ENCODE measurements at regions of chr1 and their contacts with region 1.

Region 1: DNA sequence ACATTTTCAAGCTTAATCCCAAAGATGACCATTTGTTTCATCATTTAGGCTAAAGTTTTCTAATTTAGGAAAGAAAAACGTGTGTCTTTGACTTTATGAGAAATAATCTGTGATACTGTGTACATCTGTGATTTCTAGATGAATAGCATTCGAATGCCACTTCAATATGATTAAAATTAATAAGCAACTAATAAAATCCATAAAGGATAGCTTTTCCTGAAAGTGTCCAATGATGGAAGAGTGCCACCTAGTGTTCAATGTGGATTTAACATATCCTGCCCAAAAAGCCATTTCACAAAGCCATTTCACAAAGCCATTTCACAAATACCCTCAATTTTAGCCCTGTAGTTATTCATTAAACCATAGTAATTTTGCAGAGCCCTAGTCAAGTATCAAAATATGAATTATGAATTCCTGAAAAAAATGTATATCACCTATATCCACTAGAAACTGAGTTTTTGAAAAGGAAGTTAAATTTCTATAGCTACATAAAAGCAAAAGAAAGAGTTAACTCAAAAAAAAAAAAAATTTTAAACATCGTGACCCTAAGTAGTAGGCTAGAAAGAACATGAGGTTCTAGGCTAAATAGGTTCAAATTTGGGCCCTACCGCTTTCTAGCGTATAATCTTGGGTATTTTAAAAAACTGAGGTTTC is 19.1 kb downstream of the NME7 start:
- DNase-seq: peak; percentile 84
- ATAC-seq: no peak
- H3K4me3 ChIP-seq: no peak overlapping the region
- H3K27ac ChIP-seq: no peak overlapping the region
- H3K4me1 ChIP-seq: 0 out of 2 replicates have a peak, but pooled peaks cover 2% of the 10 kb centered on the region
- H3K27me3 ChIP-seq: no peaks in the 10 kb centered on the region
- CTCF ChIP-seq: peak; percentile 97

Region 2: DNA sequence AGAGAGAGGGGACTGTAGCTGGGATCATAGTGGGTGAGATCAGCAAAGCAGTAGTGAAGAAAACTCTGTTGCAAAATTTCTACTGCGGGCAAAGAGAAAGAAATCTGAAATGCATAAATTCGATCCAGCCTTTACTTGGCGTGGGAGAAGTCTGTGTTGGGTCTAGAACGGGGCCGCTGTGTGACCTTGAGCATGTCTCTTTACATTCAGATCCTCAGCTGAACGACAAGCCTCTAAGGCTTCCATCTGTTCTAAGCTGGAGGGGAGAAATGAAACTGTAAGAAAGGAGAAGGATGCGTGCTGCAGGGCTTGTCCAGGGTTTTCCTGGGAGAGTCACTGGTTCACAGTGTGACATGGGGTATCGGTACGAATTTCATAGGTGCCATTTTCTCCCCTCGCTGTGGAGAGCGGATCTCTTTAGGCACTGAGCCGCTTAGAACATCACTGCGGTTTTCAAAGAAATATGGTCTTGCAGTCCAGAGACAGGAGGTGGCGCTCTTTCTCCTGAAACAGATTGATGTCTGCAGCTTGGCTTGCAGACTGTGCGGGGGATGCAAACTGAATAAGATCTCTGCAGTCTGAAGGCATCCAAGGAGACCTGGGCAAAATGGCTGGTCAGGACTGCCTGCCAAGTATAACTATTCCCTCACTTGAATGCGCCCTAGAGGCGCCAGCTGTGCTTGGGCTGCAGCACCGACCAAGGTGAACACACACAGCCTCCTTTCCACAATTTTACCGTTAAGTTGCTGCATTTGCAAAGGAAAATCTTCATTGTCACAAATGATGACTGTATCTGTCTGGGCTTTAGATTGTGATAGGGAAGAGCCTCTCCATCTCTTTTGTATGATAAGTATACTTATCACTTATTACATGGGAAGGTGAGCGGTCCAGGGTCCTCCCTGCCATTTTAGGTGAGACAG is 908.8 kb before region 1 on chr1:
- CTCF ChIA-PET with region 1: interaction called, 3 read pairs
- POLR2A ChIA-PET with region 1: no interaction called
- intact Hi-C with region 1: loop called (anchors 5 kb)
- DNase-seq: peak; percentile 96
- ATAC-seq: peak; percentile 94
- H3K4me3 ChIP-seq: peak overlapping the region; percentile 57
- H3K27ac ChIP-seq: no peak overlapping the region
- H3K4me1 ChIP-seq: no peaks in the 10 kb centered on the region
- H3K27me3 ChIP-seq: no peaks in the 10 kb centered on the region
- CTCF ChIP-seq: peak; percentile 96

Region 3: DNA sequence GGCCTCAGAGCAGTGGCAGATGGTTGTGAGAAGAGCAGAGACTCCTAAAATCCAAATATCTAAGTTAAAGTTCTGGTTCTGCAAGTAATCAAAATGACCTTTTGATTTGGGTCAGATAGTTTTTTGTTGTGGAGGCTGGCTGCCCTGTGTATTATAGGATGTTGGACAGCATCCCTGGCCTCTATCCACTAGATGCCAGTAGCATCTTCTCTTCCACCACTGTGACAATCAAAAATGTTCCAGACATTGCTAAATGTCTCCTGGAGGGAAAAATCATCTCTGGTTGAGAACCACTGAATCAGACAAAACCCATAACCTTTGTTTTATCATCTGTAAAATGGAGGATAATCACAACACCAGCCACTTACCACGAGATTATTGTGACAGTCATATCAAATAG is 613.6 kb before region 1 on chr1:
- CTCF ChIA-PET with region 1: no interaction called
- POLR2A ChIA-PET with region 1: no interaction called
- intact Hi-C with region 1: loop called (anchors 2 kb)
- DNase-seq: no peak
- ATAC-seq: peak; percentile 40; the same call in 1 of the 2 replicates
- H3K4me3 ChIP-seq: no peak overlapping the region
- H3K27ac ChIP-seq: no peak overlapping the region
- H3K4me1 ChIP-seq: peaks cover 5% of the 10 kb centered on the region; the same call in 1 of the 2 replicates
- H3K27me3 ChIP-seq: no peaks in the 10 kb centered on the region
- CTCF ChIP-seq: peak; percentile 46

Region 4: GRCh38 chr1:169161496-169162194 is 186.9 kb before region 1 on chr1:
- CTCF ChIA-PET with region 1: interaction called, 5 read pairs
- POLR2A ChIA-PET with region 1: no interaction called
- intact Hi-C with region 1: loop called (anchors 1 kb)
- DNase-seq: peak; percentile 58
- ATAC-seq: peak; percentile 59
- H3K4me3 ChIP-seq: no peak overlapping the region
- H3K27ac ChIP-seq: peak overlapping the region; percentile 70
- H3K4me1 ChIP-seq: peaks cover 32% of the 10 kb centered on the region
- H3K27me3 ChIP-seq: no peaks in the 10 kb centered on the region
- CTCF ChIP-seq: no peak

Region 5: GRCh38 chr1:169295425-169295824 is 53.1 kb before region 1 on chr1:
- CTCF ChIA-PET with region 1: no interaction called
- POLR2A ChIA-PET with region 1: no interaction called
- intact Hi-C with region 1: loop called (anchors 5 kb)
- DNase-seq: no peak
- ATAC-seq: no peak
- H3K4me3 ChIP-seq: no peak overlapping the region
- H3K27ac ChIP-seq: no peak overlapping the region
- H3K4me1 ChIP-seq: peaks cover 20% of the 10 kb centered on the region
- H3K27me3 ChIP-seq: no peaks in the 10 kb centered on the region
- CTCF ChIP-seq: no peak

Region 6: DNA sequence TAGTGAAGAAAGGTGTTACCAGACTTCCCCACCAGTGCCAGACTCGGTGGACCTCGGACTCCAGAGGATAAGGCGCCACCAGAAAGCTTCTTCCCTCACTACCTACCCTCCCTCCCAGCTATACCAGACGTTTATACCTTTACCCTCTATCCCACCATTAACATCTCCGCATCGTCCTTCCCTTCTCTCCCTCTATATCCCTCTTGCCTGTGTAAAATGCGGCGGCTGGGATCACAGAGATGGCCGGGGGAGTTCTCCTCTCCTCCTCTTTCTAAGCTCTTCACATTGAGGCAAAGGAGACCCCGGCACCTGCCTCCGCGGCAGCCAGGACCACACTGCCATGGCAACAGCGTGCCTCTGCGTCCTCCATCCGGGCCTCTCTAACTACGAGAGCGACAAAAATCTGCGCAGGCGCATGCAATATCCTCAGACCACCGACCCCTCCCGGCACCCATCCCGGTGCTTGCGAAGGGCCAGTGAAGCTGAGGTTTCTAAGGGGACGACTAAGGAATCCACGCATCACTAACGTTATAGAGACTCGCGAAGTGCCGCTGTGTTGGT is 78.7 kb after region 1 on chr1 and contains the start of gene CCDC181:
- CTCF ChIA-PET with region 1: no interaction called
- POLR2A ChIA-PET with region 1: no interaction called
- intact Hi-C with region 1: no loop called
- DNase-seq: no peak
- ATAC-seq: no peak
- H3K4me3 ChIP-seq: no peak within 1 kb of the TSS
- H3K27ac ChIP-seq: no peak within 1 kb of the TSS
- H3K4me1 ChIP-seq: no peaks in the 10 kb centered on the region
- H3K27me3 ChIP-seq: peaks cover 18% of the 10 kb centered on the region
- CTCF ChIP-seq: no peak
- total RNA-seq, gene CCDC181: 0.07 TPM in 1 of 2 replicates, not detected in the other

Measured in PC-3 (cell line).